ENCODE measurements at regions of chr12 and their contacts with region 1.

Region 1: DNA sequence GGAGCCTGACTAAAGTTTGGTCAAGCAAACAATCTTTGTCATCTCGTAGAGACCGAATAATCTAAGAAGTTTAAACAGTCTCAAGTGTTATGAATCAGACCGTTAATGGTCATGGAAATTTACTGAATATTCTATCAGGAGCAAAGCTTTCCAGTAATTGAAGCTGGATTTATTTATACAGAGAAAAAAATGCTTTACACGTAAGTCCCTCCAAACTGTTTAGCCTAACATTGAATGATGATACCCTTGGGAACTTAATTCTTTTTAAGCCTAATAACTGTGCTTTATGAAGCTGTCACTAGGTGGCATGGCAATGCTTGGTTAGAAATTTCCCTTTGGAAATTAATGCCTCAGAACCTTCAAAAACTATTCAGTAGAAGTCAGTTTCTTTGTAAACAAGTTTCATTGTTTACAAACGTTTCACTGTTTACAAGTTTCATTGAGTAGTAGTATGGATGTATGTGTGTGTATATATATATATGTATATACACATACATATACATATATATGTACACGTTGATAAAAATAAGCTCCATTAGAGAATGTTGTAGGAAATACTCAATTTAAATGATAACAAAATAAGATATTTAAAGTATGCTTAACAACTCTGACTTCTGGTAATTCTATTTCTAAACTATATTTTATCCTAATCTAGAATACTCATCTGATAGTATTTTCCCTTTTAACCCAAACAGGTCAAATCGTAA is 32.1 kb downstream of the DEPDC4 start:
- DNase-seq: peak in 5 of 9 donors; percentile 7 to 19 (median 14)
- ATAC-seq: peak; percentile 31
- H3K4me3 ChIP-seq: no peak overlapping the region
- H3K4me3 Mint-ChIP-seq: no peak overlapping the region
- H3K27ac ChIP-seq: no peak overlapping the region
- H3K27ac Mint-ChIP-seq: no peak overlapping the region
- H3K4me1 ChIP-seq: no peaks in the 10 kb centered on the region
- H3K4me1 Mint-ChIP-seq: no peaks in the 10 kb centered on the region
- H3K27me3 ChIP-seq: no peaks in the 10 kb centered on the region
- H3K27me3 Mint-ChIP-seq: no peaks in the 10 kb centered on the region

Region 2: GRCh38 chr12:99997806-99998205 is 236.9 kb before region 1 on chr12:
- CTCF ChIA-PET with region 1: no interaction called
- POLR2A ChIA-PET with region 1: no interaction called
- intact Hi-C with region 1: no loop called
- DNase-seq: no peak
- ATAC-seq: no peak
- H3K4me3 ChIP-seq: no peak overlapping the region
- H3K4me3 Mint-ChIP-seq: no peak overlapping the region
- H3K27ac ChIP-seq: no peak overlapping the region
- H3K27ac Mint-ChIP-seq: no peak overlapping the region
- H3K4me1 ChIP-seq: no peaks in the 10 kb centered on the region
- H3K4me1 Mint-ChIP-seq: no peaks in the 10 kb centered on the region
- H3K27me3 ChIP-seq: no peaks in the 10 kb centered on the region
- H3K27me3 Mint-ChIP-seq: no peaks in the 10 kb centered on the region

Region 3: DNA sequence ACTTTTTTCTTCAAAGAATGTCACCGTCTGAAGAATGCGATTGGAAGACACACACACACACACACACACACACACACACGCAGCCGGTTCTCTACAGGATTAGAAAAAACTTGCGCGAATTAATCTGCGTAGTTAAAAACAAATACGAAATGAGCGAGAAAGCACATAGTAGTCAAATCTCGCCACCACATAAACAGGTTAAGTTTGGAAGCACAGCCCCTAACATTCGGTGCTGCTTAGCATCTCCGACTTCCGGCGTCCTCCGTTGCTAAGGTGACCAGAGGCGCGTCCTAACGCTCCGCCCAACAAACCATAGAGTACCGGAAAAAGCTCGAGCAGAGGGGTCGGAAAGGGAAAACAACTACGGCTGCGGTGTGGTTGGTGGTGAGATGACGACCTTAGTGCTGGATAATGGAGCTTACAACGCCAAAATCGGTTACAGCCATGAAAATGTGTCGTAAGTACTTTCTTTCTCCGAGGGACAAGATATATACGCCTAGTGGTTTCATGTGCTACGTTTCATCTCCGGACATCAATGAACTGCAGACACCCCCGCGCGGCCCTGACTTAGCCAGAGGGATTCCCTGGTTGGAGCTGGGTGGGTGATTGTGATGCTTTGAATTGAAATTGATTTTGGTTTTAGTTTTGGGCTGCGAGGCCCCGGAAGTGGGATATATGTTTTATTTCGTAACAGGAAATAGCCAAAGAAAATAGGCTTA is 34.1 kb before region 1 on chr12 and contains the start of gene ACTR6:
- CTCF ChIA-PET with region 1: no interaction called
- POLR2A ChIA-PET with region 1: no interaction called
- intact Hi-C with region 1: no loop called
- DNase-seq: peak; percentile 91 to 99 (median 97)
- ATAC-seq: peak; percentile 93
- H3K4me3 ChIP-seq: peak within 1 kb of the TSS; percentile 84
- H3K4me3 Mint-ChIP-seq: peak within 1 kb of the TSS; percentile 95 to 99 (median 98)
- H3K27ac ChIP-seq: peak within 1 kb of the TSS; percentile 95
- H3K27ac Mint-ChIP-seq: peak within 1 kb of the TSS; percentile 98 to 100 (median 99)
- H3K4me1 ChIP-seq: peaks cover 10 to 27% of the 10 kb centered on the region in 2 donors
- H3K4me1 Mint-ChIP-seq: peaks cover 17 to 56% (median 44%) of the 10 kb centered on the region in 7 donors
- H3K27me3 ChIP-seq: no peaks in the 10 kb centered on the region
- H3K27me3 Mint-ChIP-seq: no peaks in the 10 kb centered on the region
- total RNA-seq, gene ACTR6: 24.1 to 46.8 (median 34.6) TPM

Region 4: DNA sequence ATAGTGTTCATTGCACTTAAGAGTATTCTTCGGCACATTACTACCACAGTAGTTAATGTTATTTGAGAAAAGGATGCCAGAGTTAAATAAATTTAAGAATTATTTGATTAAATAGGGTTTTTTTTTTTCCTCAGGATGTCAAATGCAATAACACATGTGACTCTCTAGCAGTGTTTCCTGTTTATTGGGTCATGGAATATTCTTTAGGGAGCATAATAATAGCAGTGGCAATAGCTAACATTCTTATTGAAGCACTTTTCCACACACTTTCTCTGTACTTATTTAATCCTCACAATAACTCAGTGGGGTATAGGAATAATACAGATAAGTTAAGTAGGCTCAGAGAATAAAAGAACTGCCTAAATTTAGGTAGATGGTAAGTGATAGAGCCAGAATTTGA is 76.6 kb after region 1 on chr12:
- CTCF ChIA-PET with region 1: no interaction called
- POLR2A ChIA-PET with region 1: no interaction called
- intact Hi-C with region 1: no loop called
- DNase-seq: no peak
- ATAC-seq: no peak
- H3K4me3 ChIP-seq: no peak overlapping the region
- H3K4me3 Mint-ChIP-seq: no peak overlapping the region
- H3K27ac ChIP-seq: no peak overlapping the region
- H3K27ac Mint-ChIP-seq: no peak overlapping the region
- H3K4me1 ChIP-seq: no peaks in the 10 kb centered on the region
- H3K4me1 Mint-ChIP-seq: peaks cover 0 to 2% (median 0%) of the 10 kb centered on the region in 7 donors
- H3K27me3 ChIP-seq: no peaks in the 10 kb centered on the region
- H3K27me3 Mint-ChIP-seq: no peaks in the 10 kb centered on the region

Region 5: GRCh38 chr12:100404769-100405407 is 170.1 kb after region 1 on chr12:
- CTCF ChIA-PET with region 1: no interaction called
- POLR2A ChIA-PET with region 1: no interaction called
- intact Hi-C with region 1: loop called (anchors 1 to 10 kb)
- DNase-seq: peak in 2 of 9 donors; percentile 2 to 25
- ATAC-seq: no peak
- H3K4me3 ChIP-seq: no peak overlapping the region
- H3K4me3 Mint-ChIP-seq: no peak overlapping the region
- H3K27ac ChIP-seq: no peak overlapping the region
- H3K27ac Mint-ChIP-seq: no peak overlapping the region
- H3K4me1 ChIP-seq: no peaks in the 10 kb centered on the region
- H3K4me1 Mint-ChIP-seq: no peaks in the 10 kb centered on the region
- H3K27me3 ChIP-seq: no peaks in the 10 kb centered on the region
- H3K27me3 Mint-ChIP-seq: peaks cover 0 to 17% (median 11%) of the 10 kb centered on the region in 5 donors

Region 6: GRCh38 chr12:100554608-100555077 is 319.9 kb after region 1 on chr12:
- CTCF ChIA-PET with region 1: interaction called, 5 read pairs
- POLR2A ChIA-PET with region 1: no interaction called
- intact Hi-C with region 1: loop called in 1 of 2 experiments (anchors 1 kb)
- DNase-seq: peak in 2 of 9 donors; percentile 4 to 13
- ATAC-seq: no peak
- H3K4me3 ChIP-seq: no peak overlapping the region
- H3K4me3 Mint-ChIP-seq: no peak overlapping the region
- H3K27ac ChIP-seq: no peak overlapping the region
- H3K27ac Mint-ChIP-seq: peak overlapping the region in 1 of 9 donors; percentile 25
- H3K4me1 ChIP-seq: no peaks in the 10 kb centered on the region
- H3K4me1 Mint-ChIP-seq: no peaks in the 10 kb centered on the region
- H3K27me3 ChIP-seq: no peaks in the 10 kb centered on the region
- H3K27me3 Mint-ChIP-seq: peaks cover 0 to 16% (median 7%) of the 10 kb centered on the region in 5 donors

Region 7: GRCh38 chr12:100668945-100669536 is 434.3 kb after region 1 on chr12:
- CTCF ChIA-PET with region 1: interaction called, 3 read pairs
- POLR2A ChIA-PET with region 1: no interaction called
- intact Hi-C with region 1: loop called in 1 of 2 experiments (anchors 2 kb)
- DNase-seq: peak in 4 of 9 donors; percentile 2 to 54 (median 12)
- ATAC-seq: peak; percentile 57
- H3K4me3 ChIP-seq: no peak overlapping the region
- H3K4me3 Mint-ChIP-seq: no peak overlapping the region
- H3K27ac ChIP-seq: no peak overlapping the region
- H3K27ac Mint-ChIP-seq: no peak overlapping the region
- H3K4me1 ChIP-seq: no peaks in the 10 kb centered on the region
- H3K4me1 Mint-ChIP-seq: peaks cover 0 to 2% (median 0%) of the 10 kb centered on the region in 7 donors
- H3K27me3 ChIP-seq: no peaks in the 10 kb centered on the region
- H3K27me3 Mint-ChIP-seq: peaks cover 0 to 18% (median 10%) of the 10 kb centered on the region in 5 donors

Region 8: DNA sequence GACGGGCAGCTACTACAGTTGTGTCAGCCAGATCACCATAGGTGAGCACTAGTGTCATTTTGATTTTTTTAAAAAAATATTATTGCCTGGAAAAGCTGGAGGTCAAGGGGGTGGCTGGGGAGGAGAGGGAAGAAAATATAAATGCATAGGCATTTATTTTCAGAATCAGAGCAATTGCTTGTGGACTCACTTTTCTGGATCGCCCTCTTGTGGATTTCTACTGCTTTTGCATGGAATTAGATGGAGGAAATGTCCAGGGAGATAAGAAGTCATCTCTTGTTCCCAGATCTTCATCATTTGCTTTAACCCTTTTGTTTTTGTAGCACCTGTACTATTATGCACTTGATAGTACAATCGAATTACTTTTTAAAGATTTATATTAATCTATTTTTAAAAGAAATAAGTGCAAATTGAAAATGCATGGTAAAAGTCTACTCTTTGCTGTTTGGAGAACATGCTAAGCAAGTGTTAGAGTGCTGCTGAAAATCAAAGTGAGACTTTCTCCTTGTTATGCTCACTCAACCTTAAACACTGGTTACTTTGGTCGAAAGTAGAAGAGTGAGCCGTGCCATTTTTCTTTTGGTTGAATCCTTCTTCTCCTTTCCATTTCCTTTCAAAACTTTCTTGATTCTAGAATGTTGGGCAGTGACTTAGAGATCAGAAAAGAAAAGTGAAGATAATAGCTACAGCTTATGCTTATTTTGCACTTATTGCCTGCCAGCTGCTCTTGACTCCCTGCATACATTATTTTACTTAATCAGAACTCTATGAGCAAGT is 499.3 kb after region 1 on chr12:
- CTCF ChIA-PET with region 1: no interaction called
- POLR2A ChIA-PET with region 1: no interaction called
- intact Hi-C with region 1: loop called in 1 of 2 experiments (anchors 5 kb)
- DNase-seq: no peak
- ATAC-seq: no peak
- H3K4me3 ChIP-seq: no peak overlapping the region
- H3K4me3 Mint-ChIP-seq: no peak overlapping the region
- H3K27ac ChIP-seq: no peak overlapping the region
- H3K27ac Mint-ChIP-seq: no peak overlapping the region
- H3K4me1 ChIP-seq: no peaks in the 10 kb centered on the region
- H3K4me1 Mint-ChIP-seq: no peaks in the 10 kb centered on the region
- H3K27me3 ChIP-seq: no peaks in the 10 kb centered on the region
- H3K27me3 Mint-ChIP-seq: peaks cover 4 to 24% (median 19%) of the 10 kb centered on the region in 5 donors

Region 9: DNA sequence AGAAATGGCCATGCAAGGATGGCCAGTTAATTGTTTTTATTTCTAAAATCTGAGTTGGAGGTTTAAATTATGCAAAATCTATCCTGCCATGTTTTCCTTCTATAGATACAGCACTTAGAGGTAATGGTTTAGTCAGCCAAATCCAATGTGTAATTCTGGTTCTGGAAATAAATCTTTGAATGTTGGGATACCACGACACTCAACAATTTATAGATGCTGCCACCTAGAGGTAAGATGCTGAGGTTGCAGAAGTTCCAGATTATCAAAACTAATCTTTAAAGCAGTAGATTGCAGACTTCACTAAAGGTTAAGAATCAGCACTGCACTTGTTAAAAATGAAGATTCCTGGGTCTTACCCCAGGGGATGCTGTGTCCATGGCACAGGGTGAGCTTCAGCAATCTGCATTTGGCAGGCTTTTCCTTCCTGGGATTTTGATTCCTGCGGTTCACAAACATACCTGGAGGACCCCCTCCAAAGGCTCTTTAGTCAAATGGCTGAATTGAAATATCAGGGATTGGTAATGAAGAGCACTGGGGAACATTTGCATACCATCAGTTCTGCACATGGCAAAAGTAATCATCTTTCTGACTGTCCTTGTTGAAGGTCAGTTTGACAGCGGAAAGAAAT is 506.4 kb after region 1 on chr12:
- CTCF ChIA-PET with region 1: no interaction called
- POLR2A ChIA-PET with region 1: no interaction called
- intact Hi-C with region 1: loop called (anchors 1 to 2 kb)
- DNase-seq: peak in 1 of 9 donors; percentile 8
- ATAC-seq: no peak
- H3K4me3 ChIP-seq: no peak overlapping the region
- H3K4me3 Mint-ChIP-seq: no peak overlapping the region
- H3K27ac ChIP-seq: no peak overlapping the region
- H3K27ac Mint-ChIP-seq: no peak overlapping the region
- H3K4me1 ChIP-seq: no peaks in the 10 kb centered on the region
- H3K4me1 Mint-ChIP-seq: no peaks in the 10 kb centered on the region
- H3K27me3 ChIP-seq: no peaks in the 10 kb centered on the region
- H3K27me3 Mint-ChIP-seq: peaks cover 0 to 20% (median 9%) of the 10 kb centered on the region in 5 donors

Region 10: GRCh38 chr12:100794441-100795173 is 559.9 kb after region 1 on chr12 and contains the start of gene ANO4:
- CTCF ChIA-PET with region 1: no interaction called
- POLR2A ChIA-PET with region 1: no interaction called
- intact Hi-C with region 1: no loop called
- DNase-seq: no peak
- ATAC-seq: no peak
- H3K4me3 ChIP-seq: no peak within 1 kb of the TSS
- H3K4me3 Mint-ChIP-seq: no peak within 1 kb of the TSS
- H3K27ac ChIP-seq: no peak within 1 kb of the TSS
- H3K27ac Mint-ChIP-seq: no peak within 1 kb of the TSS
- H3K4me1 ChIP-seq: no peaks in the 10 kb centered on the region
- H3K4me1 Mint-ChIP-seq: no peaks in the 10 kb centered on the region
- H3K27me3 ChIP-seq: no peaks in the 10 kb centered on the region
- H3K27me3 Mint-ChIP-seq: peaks cover 9 to 25% (median 21%) of the 10 kb centered on the region in 5 donors
- total RNA-seq, gene ANO4: not detected

Measured in naive thymus-derived CD4-positive, alpha-beta T cell (primary cell).